ENCODE measurements at regions of chr1 and their contacts with region 1.

Region 1: DNA sequence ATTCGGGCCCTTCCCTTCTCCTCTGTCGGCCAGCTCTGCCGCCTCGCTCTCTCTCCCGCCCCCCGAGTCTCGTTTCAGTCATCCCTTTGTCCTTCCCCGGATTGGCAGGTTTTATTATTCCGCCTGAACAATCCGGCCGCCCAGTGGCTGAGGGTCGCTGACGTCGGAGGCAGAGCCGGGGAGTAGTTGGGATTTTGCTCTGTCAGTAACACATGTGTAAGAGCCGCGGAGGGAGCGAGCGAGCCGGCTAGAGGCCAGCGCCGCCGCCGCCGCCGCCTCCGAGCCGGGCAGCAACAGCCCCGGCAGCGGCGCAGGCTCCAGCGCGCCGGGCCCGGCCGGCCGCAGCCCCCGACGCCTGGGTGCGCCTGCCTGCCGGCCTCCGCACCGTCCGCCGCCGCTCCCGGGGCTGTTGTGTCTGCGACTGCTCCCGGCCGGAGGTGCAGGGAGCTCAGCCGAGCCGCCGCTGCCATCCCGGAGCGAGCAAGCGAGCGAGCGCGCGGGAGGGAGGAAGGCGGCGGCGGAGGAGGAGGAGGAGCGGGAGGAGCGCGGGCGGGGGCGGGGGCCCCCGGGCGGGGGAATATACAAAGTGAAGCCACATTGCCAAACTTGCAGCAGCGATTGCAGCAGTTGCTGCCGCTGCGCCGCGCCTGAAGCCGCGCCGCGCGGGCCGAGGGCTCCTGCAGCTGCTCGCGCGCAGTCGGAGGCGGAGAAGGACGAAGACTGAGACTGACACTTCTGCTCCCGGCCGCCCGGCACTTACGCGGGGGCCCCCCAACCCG is at the start of gene LMO4:
- DNase-seq: peak; percentile 89 to 98 (median 96)
- H3K4me3 ChIP-seq: peak within 1 kb of the TSS; percentile 66 to 98 (median 84)
- H3K27ac ChIP-seq: peak within 1 kb of the TSS; percentile 82 to 99 (median 97)
- H3K27me3 ChIP-seq: no peaks in the 10 kb centered on the region
- CTCF ChIP-seq: peak in 20 of 56 donors; percentile 2 to 39 (median 19)
- total RNA-seq, gene LMO4: 105 to 422 (median 276) TPM

Region 2: DNA sequence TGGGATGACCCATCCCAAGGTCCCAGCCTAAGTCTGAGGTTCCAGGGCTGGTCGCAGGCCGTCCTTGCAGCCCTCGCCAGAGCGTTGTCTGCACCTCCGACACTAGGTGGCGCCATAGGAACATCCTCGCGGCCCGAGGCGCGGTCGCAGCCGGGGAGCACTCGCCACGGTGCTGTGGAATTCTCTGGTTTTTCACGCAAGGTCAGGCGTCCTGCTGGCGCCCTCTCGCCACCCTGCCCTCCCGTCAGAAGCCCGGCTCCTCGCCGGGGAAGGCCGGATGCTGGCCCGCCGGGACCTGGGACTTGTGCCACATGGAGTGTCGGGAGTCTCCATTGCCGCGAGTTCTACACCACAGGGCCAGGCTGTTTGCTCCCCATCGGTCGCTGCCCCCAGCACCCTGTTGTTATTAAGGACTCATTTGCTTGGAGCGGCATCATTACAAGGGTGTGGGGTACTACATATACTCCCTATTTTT is 196.6 kb before region 1 on chr1:
- intact Hi-C with region 1: loop called (anchors 2 kb)
- DNase-seq: peak; percentile 63 to 91 (median 78)
- H3K4me3 ChIP-seq: peak overlapping the region; percentile 22 to 67 (median 51)
- H3K27ac ChIP-seq: peak overlapping the region in 52 of 59 donors; percentile 11 to 91 (median 72)
- H3K27me3 ChIP-seq: no peaks in the 10 kb centered on the region
- CTCF ChIP-seq: peak; percentile 75 to 99 (median 96)

Region 3: GRCh38 chr1:87151500-87152421 is 176.7 kb before region 1 on chr1:
- intact Hi-C with region 1: loop called in 1 of 2 experiments (anchors 5 kb)
- DNase-seq: peak in 9 of 10 donors; percentile 43 to 70 (median 60)
- H3K4me3 ChIP-seq: peak overlapping the region in 49 of 59 donors; percentile 6 to 55 (median 31)
- H3K27ac ChIP-seq: peak overlapping the region in 52 of 59 donors; percentile 4 to 78 (median 58)
- H3K27me3 ChIP-seq: no peaks in the 10 kb centered on the region
- CTCF ChIP-seq: peak in 53 of 56 donors; percentile 22 to 74 (median 52)

Region 4: DNA sequence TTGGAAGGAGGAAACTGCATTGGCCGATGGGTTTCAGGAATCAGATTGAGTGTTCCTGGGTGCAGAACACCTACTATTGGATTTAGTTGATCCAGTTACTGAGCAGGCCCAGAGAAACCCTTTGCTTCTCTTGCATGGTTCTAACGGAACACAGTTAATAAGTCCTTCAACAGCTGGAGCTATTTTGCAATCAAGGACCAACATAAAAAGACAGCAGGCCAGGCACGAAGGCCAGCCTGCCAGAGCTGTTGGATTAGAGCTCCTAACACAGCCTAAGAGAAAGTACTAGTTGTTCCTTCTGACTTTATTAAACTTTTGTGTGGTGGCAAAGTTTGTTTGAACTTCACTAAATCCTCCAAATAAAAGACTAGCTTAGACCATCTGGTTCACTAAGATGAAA is 147.8 kb before region 1 on chr1:
- intact Hi-C with region 1: no loop called
- DNase-seq: no peak
- H3K4me3 ChIP-seq: no peak overlapping the region
- H3K27ac ChIP-seq: no peak overlapping the region
- H3K27me3 ChIP-seq: peaks cover 0 to 5% (median 0%) of the 10 kb centered on the region in 45 donors
- CTCF ChIP-seq: no peak

Region 5: DNA sequence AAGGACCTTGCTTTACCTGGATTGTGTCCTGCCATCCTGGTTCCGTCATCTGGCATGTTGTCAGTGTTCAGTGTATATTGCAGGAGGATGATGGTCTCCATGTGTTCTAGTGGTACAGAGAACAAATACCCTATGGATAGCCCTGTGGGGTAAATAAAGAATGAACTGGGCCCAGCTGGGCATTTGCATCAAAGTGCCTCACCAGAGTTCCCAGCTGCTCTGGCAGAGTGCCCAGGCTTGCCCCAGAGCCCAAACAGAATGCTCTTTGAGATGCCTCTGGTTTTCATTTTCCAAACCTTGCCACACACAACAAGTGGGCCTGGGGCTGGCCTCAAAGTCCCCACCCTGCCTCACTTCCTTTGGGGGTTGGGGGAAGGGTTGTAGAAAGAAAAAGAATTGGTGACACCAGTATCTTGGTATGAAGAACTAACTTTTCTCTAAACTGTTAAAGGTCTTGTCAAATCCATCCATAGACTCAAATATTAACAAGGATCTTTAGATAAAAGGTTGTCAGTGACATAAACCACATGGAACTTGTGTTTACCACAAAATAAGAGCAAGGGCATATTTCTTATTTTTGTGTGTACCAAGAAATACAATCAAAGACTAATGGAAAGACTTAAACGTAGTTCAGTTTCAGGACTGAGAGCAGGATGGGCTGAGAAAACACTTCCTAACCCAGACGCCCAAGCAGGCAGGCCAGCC is 82.5 kb after region 1 on chr1:
- intact Hi-C with region 1: loop called in 1 of 2 experiments (anchors 2 kb)
- DNase-seq: peak; percentile 41 to 96 (median 93)
- H3K4me3 ChIP-seq: peak overlapping the region in 2 of 59 donors; percentile 3 to 27
- H3K27ac ChIP-seq: peak overlapping the region; percentile 35 to 95 (median 81)
- H3K27me3 ChIP-seq: no peaks in the 10 kb centered on the region
- CTCF ChIP-seq: peak in 5 of 56 donors; percentile 10 to 22 (median 19)

Region 6: DNA sequence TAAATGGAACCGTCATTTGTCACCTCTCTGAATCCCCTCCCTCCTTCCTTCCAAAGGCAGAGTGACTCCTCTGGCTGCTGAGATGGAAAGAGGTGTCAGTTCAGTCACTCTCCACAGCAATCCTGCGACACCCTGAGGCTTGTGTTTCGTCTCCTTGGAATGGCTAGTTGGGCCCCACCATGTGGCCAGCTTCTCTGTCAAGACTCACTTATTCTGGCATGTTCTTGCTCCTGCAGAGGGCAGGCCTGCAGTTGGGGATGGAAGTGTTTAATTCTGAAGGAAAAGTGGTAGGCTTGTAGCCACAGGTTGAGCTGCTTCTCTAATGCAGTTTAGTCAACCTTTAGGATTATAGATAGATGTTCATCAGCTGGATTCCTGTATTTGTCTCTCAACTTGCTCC is 149.8 kb after region 1 on chr1:
- intact Hi-C with region 1: loop called in 1 of 2 experiments (anchors 5 kb)
- DNase-seq: peak in 1 of 10 donors; percentile 38
- H3K4me3 ChIP-seq: no peak overlapping the region
- H3K27ac ChIP-seq: no peak overlapping the region
- H3K27me3 ChIP-seq: no peaks in the 10 kb centered on the region
- CTCF ChIP-seq: peak in 17 of 56 donors; percentile 12 to 39 (median 27)

Region 7: GRCh38 chr1:87953732-87954344 is 625.4 kb after region 1 on chr1:
- intact Hi-C with region 1: loop called (anchors 10 kb)
- DNase-seq: peak in 8 of 10 donors; percentile 25 to 71 (median 62)
- H3K4me3 ChIP-seq: no peak overlapping the region
- H3K27ac ChIP-seq: peak overlapping the region in 8 of 59 donors; percentile 3 to 46 (median 41)
- H3K27me3 ChIP-seq: no peaks in the 10 kb centered on the region
- CTCF ChIP-seq: peak; percentile 45 to 87 (median 76)

Region 8: DNA sequence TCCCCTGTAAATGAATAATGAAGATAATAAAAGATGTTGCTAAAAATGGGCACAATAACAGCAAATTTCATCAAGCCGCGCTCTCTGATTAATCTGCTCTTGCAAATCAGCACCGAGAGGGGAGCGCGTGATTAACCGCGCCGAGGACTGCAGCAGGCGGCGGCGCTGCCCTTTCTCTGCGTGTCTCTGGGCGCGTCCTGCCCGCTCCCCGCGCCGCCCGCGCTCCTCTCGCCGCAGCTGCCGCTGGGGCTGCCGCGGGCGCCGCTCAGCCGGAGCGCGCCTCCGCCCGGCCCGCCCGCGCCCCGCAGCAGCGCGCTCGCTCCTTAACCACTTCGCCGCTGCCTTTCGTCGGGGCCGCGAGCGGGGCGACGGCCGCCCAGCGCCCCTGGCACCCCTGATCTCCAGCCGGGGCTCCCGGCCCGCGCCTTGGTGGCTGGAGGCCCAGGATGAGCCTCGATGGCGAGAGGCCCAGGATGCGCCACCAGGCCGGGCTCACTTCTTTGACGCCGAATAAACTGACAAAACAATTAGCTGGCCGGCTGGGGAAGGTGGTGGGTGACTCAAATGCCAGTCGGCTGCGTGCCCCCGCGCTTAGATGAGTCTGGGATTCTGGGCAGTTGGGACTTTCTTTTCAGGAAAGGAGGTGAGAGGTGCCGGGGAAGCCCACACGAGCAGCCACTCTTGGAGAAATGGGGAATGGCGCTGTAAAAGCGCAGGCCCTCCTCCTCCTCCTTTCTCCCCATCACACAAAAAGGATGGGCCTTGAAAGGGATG is 1134.2 kb after region 1 on chr1:
- intact Hi-C with region 1: loop called in 1 of 2 experiments (anchors 5 kb)
- DNase-seq: peak; percentile 12 to 83 (median 72)
- H3K4me3 ChIP-seq: peak overlapping the region; percentile 35 to 74 (median 59)
- H3K27ac ChIP-seq: peak overlapping the region; percentile 25 to 98 (median 95)
- H3K27me3 ChIP-seq: no peaks in the 10 kb centered on the region
- CTCF ChIP-seq: peak in 21 of 56 donors; percentile 5 to 38 (median 18)